ENCODE measurements at regions of chr12 and their contacts with region 1.

Region 1: GRCh38 chr12:123223241-123223668 is 9.7 kb downstream of the MPHOSPH9 start:
- DNase-seq: no peak
- H3K4me3 ChIP-seq: no peak overlapping the region
- H3K27ac ChIP-seq: no peak overlapping the region
- H3K4me1 ChIP-seq: no peaks in the 10 kb centered on the region
- H3K27me3 ChIP-seq: no peaks in the 10 kb centered on the region
- CTCF ChIP-seq: no peak
- EP300 ChIP-seq: no peak
- POLR2A ChIP-seq: no peak

Region 2: DNA sequence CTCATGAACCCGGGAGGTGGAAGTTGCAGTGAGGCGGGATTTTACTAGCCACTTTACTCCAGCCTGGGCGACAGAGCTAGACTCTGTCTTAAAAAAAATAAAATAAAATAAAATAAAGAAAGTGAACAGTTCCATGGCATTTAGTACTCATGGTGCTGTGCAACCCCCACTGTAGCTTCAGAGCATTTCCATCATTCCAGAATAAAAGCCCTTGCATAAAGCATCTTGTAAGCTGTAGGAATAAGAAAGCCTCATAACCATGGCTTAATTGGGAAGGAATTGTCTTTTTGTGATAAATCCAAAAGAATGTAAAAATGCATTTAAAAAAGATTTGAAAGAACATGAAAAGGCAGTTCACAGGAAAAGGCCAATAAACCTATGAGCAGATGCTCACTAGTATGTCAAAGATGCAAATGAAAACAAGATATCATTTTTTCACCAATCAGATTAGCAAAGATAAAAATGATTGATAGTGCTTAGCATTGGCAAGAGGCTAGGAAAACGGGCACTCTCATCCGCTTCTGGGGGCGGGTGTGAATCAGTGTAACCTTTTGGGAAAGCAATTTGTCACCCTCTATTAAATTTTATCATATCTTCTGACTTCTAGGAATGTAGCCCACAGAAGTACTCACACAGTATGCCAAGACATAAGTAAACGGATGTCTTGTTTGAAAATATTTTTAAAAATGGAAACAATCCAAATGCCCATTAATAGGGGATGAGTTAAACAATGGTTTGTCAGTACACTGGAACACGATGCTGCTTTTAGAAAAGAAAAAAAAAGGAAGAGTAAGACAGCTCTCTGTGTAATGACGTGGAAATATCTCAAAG is 1258.2 kb before region 1 on chr12:
- intact Hi-C with region 1: no loop called
- DNase-seq: no peak
- H3K4me3 ChIP-seq: no peak overlapping the region
- H3K27ac ChIP-seq: peak overlapping the region in 1 of 4 donors; percentile 18
- H3K4me1 ChIP-seq: peaks cover 0 to 16% (median 7%) of the 10 kb centered on the region in 4 donors
- H3K27me3 ChIP-seq: no peaks in the 10 kb centered on the region
- CTCF ChIP-seq: no peak
- EP300 ChIP-seq: no peak
- POLR2A ChIP-seq: no peak

Region 3: GRCh38 chr12:123163227-123163626 is 60.0 kb before region 1 on chr12:
- intact Hi-C with region 1: loop called (anchors 5 kb)
- DNase-seq: no peak
- H3K4me3 ChIP-seq: no peak overlapping the region
- H3K27ac ChIP-seq: no peak overlapping the region
- H3K4me1 ChIP-seq: no peaks in the 10 kb centered on the region
- H3K27me3 ChIP-seq: no peaks in the 10 kb centered on the region
- CTCF ChIP-seq: no peak
- EP300 ChIP-seq: no peak
- POLR2A ChIP-seq: no peak

Region 4: GRCh38 chr12:123401753-123402683 is 178.8 kb after region 1 on chr12:
- intact Hi-C with region 1: no loop called
- DNase-seq: no peak
- H3K4me3 ChIP-seq: no peak overlapping the region
- H3K27ac ChIP-seq: peak overlapping the region in 1 of 4 donors; percentile 2
- H3K4me1 ChIP-seq: peaks cover 0 to 27% (median 24%) of the 10 kb centered on the region in 4 donors
- H3K27me3 ChIP-seq: no peaks in the 10 kb centered on the region
- CTCF ChIP-seq: no peak
- EP300 ChIP-seq: no peak
- POLR2A ChIP-seq: no peak